ENCODE measurements at regions of chr16 and their contacts with region 1.

Region 1: DNA sequence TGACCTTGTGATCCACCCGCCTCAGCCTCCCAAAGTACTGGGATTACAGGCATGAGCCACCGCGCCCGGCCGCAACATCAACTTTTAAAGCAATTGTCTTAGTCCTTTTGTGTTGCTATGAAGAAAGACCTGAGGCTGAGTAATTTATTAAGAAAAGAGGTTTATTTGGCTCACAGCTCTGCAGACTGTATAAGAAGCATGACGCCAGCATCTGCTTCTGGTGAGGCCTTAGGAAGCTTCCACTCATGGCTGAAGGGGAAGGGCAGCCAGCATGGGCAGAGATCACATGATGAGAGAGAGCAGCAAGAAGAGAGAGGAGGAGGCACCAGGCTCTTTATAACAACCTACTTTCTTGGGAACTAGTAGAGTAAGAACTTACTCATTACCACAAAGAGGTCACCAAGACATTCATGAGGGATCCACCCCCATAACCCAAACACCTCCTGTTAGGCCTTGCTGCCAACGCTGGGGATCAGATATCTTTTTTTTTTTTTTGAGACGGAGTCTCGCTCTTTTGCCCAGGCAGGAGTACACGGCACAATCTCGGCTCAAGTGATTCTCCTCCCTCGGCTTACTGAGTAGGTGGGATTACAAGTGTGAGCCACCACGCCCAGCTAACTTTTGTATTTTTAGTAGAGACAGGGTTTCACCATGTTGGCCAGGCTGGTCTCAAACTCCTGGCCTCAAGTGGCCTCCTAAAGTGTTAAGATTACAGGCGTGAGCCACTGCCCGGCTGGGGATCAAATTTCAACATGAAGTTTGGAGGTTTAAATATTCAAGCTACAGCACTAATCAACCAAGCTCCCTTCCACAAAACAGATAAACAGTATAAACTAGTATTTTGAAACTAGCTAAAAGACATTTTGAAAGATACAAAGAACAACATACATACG is 21.4 kb upstream of the GPT2 start:
- DNase-seq: no peak
- H3K4me3 Mint-ChIP-seq: no peak overlapping the region
- H3K27ac Mint-ChIP-seq: peak overlapping the region; percentile 56
- H3K4me1 Mint-ChIP-seq: peaks cover 31% of the 10 kb centered on the region
- H3K27me3 Mint-ChIP-seq: no peaks in the 10 kb centered on the region

Region 2: DNA sequence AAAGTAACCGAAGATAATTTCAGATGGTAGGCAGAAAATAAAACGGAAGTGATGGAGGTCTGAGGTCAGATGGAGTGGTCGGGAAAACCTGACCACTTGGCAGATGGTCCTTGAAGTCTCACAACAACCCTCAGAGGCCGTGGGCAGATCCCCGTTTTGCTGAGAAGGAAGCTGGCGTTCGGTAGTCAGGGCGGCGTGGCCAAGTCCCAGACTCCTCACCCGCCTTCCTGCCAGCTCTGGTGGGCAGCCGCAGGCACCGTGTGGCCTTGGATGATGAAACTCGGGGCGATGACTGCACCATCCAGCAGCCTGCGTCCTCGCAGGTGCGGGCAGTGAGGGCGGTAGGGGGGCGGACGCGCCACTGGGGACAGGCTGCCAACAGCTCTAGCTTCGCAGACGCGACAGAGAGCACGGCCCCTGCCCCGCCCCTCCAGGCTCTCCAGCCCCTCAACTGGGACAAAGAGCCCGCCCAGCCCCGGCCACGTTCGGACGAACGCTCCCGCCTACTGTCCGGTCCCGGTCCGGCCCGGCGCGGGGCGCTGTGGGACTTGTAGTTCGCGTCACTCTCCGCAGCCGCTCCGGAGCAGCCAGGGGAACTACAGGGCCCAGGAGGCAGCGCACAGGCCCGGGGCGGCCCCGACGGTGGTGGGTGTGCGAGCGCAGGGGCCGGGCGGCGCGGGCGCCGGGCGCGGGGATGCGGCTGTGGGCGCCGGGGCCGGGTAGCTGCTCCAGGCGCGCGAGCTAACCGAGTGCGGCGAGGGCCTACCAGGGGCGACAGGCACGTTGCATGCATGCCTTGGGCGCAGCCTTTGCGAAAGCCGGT is 21.1 kb after region 1 on chr16 and contains the start of gene GPT2:
- intact Hi-C with region 1: loop called (anchors 2 kb)
- DNase-seq: peak; percentile 80
- H3K4me3 Mint-ChIP-seq: peak within 1 kb of the TSS; percentile 84
- H3K27ac Mint-ChIP-seq: peak within 1 kb of the TSS; percentile 77
- H3K4me1 Mint-ChIP-seq: peaks cover 12% of the 10 kb centered on the region
- H3K27me3 Mint-ChIP-seq: peaks cover 21% of the 10 kb centered on the region
- total RNA-seq, gene GPT2: 12.9 and 13.5 TPM in 2 replicates